PC-3 (cell line): ENCODE measurements at regions of chr12 and their contacts with region 1.

Region 1: DNA sequence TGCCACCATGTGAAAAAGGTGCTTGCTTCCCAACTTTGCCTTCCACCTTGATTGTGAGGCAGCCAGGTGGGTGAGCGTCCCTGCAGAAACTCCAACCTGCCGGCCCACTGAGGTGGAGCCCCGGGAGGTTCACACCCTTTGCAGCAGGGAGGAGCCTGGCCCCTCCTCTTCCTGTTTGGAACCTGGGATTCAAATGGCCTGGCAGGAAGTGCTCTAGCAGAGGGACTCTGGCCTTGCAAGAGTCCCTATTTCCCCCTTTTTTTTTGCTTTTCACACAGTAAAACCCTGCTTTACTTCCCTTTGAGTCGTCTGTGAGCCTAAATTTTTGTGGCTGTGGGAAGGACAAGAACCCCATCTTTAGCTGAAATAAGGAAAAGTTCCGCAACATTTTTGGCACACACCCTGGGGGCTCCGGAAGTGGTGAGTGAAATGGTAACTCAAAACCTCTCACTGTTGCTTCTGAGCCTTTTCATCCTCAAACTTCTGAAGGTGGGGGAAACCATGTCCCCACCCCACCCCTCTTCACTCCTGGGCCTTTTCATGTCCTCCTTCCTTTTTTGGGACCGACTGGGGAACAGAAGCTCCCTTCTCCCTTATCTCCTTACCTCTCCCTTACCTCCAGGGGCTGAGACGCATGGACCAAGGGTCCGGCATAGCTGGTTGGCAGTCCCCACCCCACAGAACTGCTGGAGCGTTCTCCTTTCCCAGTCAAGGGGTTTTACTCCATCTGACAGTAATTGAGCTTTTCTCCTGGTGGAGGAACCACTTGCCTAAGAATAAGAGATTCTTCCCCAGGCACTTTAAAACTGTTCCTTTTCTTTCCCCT is 102.0 kb downstream of the KCNMB4 start:
- DNase-seq: no peak
- ATAC-seq: no peak
- H3K4me3 ChIP-seq: no peak overlapping the region
- H3K27ac ChIP-seq: no peak overlapping the region
- H3K4me1 ChIP-seq: no peaks in the 10 kb centered on the region
- H3K27me3 ChIP-seq: no peaks in the 10 kb centered on the region
- CTCF ChIP-seq: no peak

Region 2: DNA sequence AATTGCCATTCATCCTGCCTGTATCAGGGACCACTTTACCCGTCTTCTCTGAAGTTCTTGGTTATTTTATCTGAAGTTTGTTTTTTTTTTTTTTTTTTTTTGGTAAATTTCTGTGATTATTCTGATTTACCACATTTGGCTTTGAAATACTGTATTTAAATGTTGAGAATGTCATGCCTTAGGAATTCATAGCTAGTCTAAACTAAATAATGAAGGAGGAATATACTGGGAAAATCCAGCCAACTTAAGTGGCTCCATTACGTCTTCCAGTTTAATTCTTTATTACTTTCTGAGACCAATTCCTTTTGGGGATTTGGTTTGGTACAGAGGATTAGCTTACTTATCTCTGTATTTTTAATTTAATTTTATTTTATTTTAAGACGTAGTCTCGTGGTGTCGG is 162.3 kb before region 1 on chr12:
- CTCF ChIA-PET with region 1: no interaction called
- POLR2A ChIA-PET with region 1: no interaction called
- intact Hi-C with region 1: no loop called
- DNase-seq: no peak
- ATAC-seq: no peak
- H3K4me3 ChIP-seq: no peak overlapping the region
- H3K27ac ChIP-seq: no peak overlapping the region
- H3K4me1 ChIP-seq: no peaks in the 10 kb centered on the region
- H3K27me3 ChIP-seq: no peaks in the 10 kb centered on the region
- CTCF ChIP-seq: no peak

Region 3: GRCh38 chr12:71070416-71071155 is 602.5 kb after region 1 on chr12:
- CTCF ChIA-PET with region 1: no interaction called
- POLR2A ChIA-PET with region 1: interaction called, 11 read pairs
- intact Hi-C with region 1: no loop called
- DNase-seq: peak; percentile 50
- ATAC-seq: peak; percentile 54
- H3K4me3 ChIP-seq: no peak overlapping the region
- H3K27ac ChIP-seq: peak overlapping the region; percentile 78
- H3K4me1 ChIP-seq: peaks cover 19% of the 10 kb centered on the region
- H3K27me3 ChIP-seq: no peaks in the 10 kb centered on the region
- CTCF ChIP-seq: no peak